ENCODE measurements at regions of chr10 and their contacts with region 1.

Region 1: DNA sequence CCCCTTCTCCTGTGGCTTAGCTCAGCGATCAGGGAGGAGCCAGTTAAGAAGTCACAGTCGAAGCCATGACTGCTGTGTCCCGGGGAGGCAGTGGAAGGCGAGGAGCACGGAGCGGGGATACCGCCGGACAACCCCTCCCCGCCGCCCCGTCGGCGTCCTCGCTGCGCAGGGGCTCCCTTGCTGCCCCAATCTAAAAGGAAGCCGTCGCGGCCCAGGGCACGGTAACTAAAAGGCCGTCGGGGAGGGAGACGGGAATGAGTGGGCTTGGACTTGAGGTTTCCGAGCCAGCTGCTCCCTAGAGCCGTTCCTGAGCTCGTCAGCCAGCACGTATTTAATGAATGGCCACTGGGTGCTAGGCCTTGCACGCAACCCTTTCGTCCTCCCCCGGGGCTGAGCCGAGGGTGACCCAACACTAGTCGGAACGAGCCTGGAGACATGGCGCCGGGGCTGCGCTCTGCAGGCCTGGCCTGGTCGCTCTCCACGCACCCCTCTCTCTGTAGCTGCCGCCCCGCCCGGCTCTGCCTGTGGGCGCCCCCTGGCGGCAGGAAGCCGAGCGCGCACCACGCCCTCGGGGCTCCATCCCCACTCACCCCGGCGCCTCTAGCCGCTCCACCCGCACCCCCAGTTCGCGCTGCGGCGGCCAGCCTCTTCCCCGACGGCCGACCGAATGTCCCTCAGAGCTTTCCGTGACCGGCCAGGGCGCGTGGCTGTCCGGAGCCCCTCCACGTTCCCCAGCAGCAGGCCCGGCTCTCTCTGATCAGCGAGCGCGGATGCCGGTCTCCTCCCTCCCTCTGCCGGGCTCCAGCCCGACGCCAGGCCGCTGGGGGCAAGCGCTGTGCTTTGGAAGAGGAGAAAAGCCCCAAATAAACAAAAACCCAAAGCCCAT is 29.3 kb upstream of the KCNK18 start:
- DNase-seq: peak; percentile 96
- H3K4me3 ChIP-seq: peak overlapping the region; percentile 28 to 37
- H3K27ac ChIP-seq: no peak overlapping the region
- H3K4me1 ChIP-seq: peaks cover 0 to 9% of the 10 kb centered on the region in 2 experiments; a peak in 1 of 4 replicates
- H3K27me3 ChIP-seq: peaks cover 85% of the 10 kb centered on the region
- CTCF ChIP-seq: peak; percentile 82
- EP300 ChIP-seq: no peak
- RAD21 ChIP-seq: peak; percentile 57

Region 2: DNA sequence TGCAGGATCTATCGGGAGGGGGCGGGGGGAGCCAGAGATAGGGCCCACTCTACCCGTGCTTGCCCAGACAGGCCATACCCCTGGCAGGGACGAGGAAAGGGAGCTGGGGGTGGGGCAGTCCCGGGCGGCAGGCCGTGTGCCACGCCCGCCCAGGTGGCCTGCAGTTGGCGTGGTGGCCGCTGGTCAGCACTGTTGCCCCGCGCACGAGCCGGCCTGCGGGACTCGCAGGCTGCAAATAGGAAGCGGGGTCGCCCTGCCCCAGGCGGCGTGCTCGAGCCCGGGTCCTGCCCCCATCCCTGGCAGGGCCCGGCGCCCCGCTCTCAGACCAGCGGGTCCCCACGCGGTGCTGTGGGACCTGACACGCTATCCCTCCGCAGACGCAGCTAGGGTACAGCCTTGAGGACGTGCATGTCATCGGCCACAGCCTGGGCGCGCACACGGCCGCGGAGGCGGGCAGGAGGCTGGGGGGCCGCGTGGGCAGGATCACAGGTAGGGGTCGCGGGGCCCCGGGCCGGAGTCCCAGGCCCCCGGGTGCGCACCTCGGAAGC is 540.6 kb before region 1 on chr10:
- CTCF ChIA-PET with region 1: interaction called, 29 read pairs
- POLR2A ChIA-PET with region 1: no interaction called
- DNase-seq: peak; percentile 92
- H3K4me3 ChIP-seq: peak overlapping the region; percentile 32 to 39
- H3K27ac ChIP-seq: no peak overlapping the region
- H3K4me1 ChIP-seq: no peaks in the 10 kb centered on the region; a peak in 1 of 4 replicates
- H3K27me3 ChIP-seq: peaks cover 5% of the 10 kb centered on the region; the same call in 1 of the 2 replicates
- CTCF ChIP-seq: peak; percentile 45
- EP300 ChIP-seq: no peak
- RAD21 ChIP-seq: peak; percentile 65

Region 3: DNA sequence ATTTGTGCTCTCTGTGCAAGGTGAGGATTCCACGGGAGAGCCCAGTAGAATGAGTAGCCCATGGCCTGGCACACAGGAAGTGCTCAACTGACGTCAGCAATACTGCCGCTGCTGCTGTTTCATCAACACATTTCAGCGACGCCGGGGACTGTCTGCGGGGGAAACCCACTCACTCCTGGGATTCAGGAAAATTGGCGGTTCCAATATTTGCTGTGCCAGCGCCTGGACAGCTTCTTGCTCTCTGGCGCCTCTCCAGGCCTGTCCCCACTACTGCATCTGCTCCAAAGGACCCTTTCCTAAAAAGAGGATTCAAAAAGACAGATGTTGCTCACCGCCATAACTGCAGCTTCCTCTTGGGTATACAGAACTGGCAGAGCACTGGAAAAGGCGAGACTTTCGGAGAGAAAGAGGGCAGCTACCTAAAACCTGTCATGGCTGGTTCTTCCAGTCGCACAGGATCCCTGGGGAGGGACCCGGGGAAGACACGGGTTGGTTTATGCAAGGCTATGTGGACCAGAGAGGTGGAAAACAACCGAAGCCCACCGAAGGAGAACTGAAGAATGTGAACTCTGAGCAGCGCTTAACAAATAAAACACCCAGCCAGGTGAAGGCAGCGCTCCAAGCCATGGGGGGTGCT is 358.4 kb before region 1 on chr10:
- CTCF ChIA-PET with region 1: interaction called, 265 read pairs
- POLR2A ChIA-PET with region 1: no interaction called
- DNase-seq: peak; percentile 70
- H3K4me3 ChIP-seq: no peak overlapping the region
- H3K27ac ChIP-seq: no peak overlapping the region
- H3K4me1 ChIP-seq: no peaks in the 10 kb centered on the region; a peak in 1 of 4 replicates
- H3K27me3 ChIP-seq: peaks cover 3% of the 10 kb centered on the region; the same call in 1 of the 2 replicates
- CTCF ChIP-seq: peak; percentile 54
- EP300 ChIP-seq: no peak
- RAD21 ChIP-seq: 0 out of 2 replicates have a peak, but pooled peaks have one; percentile 8

Region 4: DNA sequence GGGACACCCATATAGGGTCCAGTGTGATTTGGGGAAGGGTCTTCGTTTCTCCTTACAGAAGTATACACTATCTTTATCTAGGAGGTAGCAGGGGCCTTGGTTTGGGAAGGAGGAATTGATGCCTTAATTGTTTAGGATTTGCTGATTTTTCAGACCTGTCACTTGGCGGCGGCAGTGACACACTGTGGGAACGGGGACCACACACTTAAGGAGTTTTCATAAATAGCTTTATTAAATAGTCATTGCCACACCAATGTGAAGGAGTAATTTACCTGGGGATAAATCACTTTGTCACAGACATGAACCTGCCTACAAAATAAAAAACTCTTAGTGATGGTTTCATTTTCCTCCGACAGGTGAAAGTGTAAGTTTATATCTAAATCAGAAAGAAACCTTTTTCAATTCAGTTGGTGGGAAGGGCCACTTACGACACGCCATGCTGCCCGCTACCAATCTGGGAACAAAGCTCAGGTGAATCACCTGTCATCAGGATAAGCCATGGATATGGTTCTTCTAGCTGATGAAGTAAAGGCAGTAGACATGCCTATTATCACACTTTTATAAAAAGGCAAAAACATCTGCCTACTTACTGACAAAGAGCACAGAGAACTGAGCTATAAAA is 331.0 kb before region 1 on chr10:
- CTCF ChIA-PET with region 1: interaction called, 64 read pairs
- POLR2A ChIA-PET with region 1: no interaction called
- DNase-seq: no peak
- H3K4me3 ChIP-seq: no peak overlapping the region
- H3K27ac ChIP-seq: no peak overlapping the region
- H3K4me1 ChIP-seq: no peaks in the 10 kb centered on the region
- H3K27me3 ChIP-seq: no peaks in the 10 kb centered on the region
- CTCF ChIP-seq: peak; percentile 21; the same call in 1 of the 2 replicates
- EP300 ChIP-seq: no peak
- RAD21 ChIP-seq: peak; percentile 67

Region 5: DNA sequence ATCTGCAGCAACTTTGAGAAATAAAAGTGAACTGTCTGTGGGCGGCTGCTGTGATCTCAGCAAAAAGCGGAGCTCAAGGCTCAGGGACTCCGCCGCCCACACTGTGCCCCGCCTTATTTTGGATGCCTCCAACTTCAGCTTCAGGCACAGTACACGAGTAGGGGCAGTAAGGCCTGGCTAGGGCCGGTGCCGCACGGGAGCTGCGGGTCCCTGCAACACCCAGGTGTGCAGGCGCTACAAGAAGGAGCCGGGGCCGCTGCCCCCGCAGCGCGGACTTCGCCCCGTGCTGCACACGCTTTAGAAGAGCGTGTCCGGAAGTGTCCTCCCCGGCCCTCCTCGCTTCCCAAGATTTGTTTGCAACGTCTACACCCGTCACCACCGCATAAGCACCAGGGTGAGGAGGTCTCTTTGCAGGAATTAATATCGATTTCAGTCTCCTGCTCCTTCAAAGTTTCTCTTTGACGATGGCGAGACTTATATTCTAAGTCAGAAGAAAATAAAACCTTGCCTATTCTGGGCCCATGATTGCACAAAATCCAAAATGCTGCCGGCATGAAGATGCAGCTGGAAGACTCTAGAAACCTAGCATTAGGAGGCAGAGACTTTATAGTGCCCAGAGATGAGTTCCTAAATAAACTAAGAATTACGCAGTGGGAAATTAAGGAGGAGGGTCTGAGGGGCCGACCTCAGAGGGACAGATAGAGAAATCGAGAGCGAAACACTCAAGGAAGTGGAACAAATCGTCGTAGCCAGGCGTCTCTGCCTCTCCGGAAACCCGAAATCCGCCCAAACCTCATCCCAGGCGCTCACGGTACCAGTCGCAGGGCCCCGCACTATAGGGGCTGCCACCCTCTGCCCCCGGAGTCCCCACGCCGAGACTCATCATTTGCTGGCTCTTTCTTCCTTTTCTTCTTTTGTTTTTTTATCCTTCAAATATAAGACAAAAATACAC is 36.4 kb before region 1 on chr10:
- CTCF ChIA-PET with region 1: interaction called, 37 read pairs
- POLR2A ChIA-PET with region 1: no interaction called
- DNase-seq: peak; percentile 41
- H3K4me3 ChIP-seq: no peak overlapping the region
- H3K27ac ChIP-seq: no peak overlapping the region
- H3K4me1 ChIP-seq: no peaks in the 10 kb centered on the region; a peak in 2 of 4 replicates
- H3K27me3 ChIP-seq: peaks cover 82% of the 10 kb centered on the region
- CTCF ChIP-seq: no peak
- EP300 ChIP-seq: no peak
- RAD21 ChIP-seq: no peak

Region 6: GRCh38 chr10:117148284-117148683 is 19.7 kb before region 1 on chr10:
- CTCF ChIA-PET with region 1: interaction called, 14 read pairs
- POLR2A ChIA-PET with region 1: no interaction called
- DNase-seq: no peak
- H3K4me3 ChIP-seq: no peak overlapping the region
- H3K27ac ChIP-seq: no peak overlapping the region
- H3K4me1 ChIP-seq: no peaks in the 10 kb centered on the region; a peak in 1 of 4 replicates
- H3K27me3 ChIP-seq: peaks cover 3% of the 10 kb centered on the region; the same call in 1 of the 2 replicates
- CTCF ChIP-seq: no peak
- EP300 ChIP-seq: no peak
- RAD21 ChIP-seq: no peak